Posterior cingulate gyrus (tissue), 11 donors: ENCODE measurements at regions of chr10 and their contacts with region 1.

Region 1: GRCh38 chr10:44974628-44975431 is 3.8 kb downstream of the DEPP1 start:
- DNase-seq: peak in 8 of 10 donors; percentile 53 to 96 (median 66)

Region 2: GRCh38 chr10:44878706-44879530 is 95.9 kb before region 1 on chr10:
- intact Hi-C with region 1: loop called (anchors 5 kb)
- DNase-seq: peak; percentile 89 to 99 (median 93)

Region 3: GRCh38 chr10:44932517-44933450 is 42.0 kb before region 1 on chr10:
- intact Hi-C with region 1: loop called (anchors 1 kb)
- DNase-seq: peak; percentile 77 to 98 (median 94)